ENCODE measurements at regions of chr3 and their contacts with region 1.

Region 1: GRCh38 chr3:33131331-33132018 is 17.7 kb downstream of the CRTAP start:
- DNase-seq: peak in 1 of 2 donors; percentile 69
- ATAC-seq: peak; percentile 59 to 81 (median 80)
- H3K4me3 ChIP-seq: no peak overlapping the region
- H3K4me3 Mint-ChIP-seq: no peak overlapping the region
- H3K27ac ChIP-seq: no peak overlapping the region
- H3K27ac Mint-ChIP-seq: no peak overlapping the region
- H3K4me1 ChIP-seq: no peaks in the 10 kb centered on the region
- H3K4me1 Mint-ChIP-seq: peaks cover 7 to 12% of the 10 kb centered on the region in 2 donors
- H3K27me3 ChIP-seq: no peaks in the 10 kb centered on the region
- H3K27me3 Mint-ChIP-seq: no peaks in the 10 kb centered on the region
- CTCF ChIP-seq: peak; percentile 71

Region 2: DNA sequence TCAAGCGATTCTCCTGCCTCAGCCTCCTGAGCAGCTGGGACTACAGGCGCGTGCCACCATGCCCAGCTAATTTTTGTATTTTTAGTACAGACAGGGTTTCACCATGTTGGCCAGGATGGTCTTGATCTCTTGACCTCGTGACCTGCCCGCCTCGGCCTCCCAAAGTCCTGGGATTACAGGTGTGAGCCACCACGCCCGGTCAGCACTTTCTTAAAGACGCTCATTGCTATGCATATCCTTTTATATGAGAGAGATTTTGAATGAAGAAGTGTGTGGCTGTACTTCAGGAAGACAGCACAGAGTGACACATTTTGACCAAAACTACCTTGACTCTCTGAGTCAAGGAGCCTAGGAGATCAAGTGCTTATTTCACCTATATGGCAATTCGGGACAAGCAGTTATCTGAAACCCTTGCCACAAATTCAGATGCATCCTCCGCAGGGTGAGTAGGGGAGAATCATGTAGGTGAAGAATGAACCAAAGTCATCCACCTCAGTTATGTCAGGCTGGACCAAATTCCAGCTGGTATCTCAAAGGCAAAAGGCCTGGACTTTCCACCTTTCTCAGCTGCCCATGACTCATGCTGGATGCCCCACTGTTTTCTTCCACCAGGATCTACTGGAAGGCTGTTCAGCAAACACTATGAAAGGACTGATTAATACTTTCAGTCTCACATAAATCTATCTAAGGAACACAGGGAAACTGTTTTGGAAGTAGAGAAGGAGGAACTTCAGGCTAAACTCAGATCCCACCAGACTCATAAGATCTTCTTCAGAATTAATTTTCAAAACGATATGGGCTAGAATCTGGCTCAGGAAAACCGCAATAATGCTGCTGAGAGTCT is 55.3 kb after region 1 on chr3:
- intact Hi-C with region 1: no loop called
- DNase-seq: no peak
- ATAC-seq: no peak
- H3K4me3 ChIP-seq: no peak overlapping the region
- H3K4me3 Mint-ChIP-seq: no peak overlapping the region
- H3K27ac ChIP-seq: no peak overlapping the region
- H3K27ac Mint-ChIP-seq: no peak overlapping the region
- H3K4me1 ChIP-seq: no peaks in the 10 kb centered on the region
- H3K4me1 Mint-ChIP-seq: no peaks in the 10 kb centered on the region
- H3K27me3 ChIP-seq: no peaks in the 10 kb centered on the region
- H3K27me3 Mint-ChIP-seq: peaks cover 7 to 15% of the 10 kb centered on the region in 2 donors
- CTCF ChIP-seq: no peak

Region 3: DNA sequence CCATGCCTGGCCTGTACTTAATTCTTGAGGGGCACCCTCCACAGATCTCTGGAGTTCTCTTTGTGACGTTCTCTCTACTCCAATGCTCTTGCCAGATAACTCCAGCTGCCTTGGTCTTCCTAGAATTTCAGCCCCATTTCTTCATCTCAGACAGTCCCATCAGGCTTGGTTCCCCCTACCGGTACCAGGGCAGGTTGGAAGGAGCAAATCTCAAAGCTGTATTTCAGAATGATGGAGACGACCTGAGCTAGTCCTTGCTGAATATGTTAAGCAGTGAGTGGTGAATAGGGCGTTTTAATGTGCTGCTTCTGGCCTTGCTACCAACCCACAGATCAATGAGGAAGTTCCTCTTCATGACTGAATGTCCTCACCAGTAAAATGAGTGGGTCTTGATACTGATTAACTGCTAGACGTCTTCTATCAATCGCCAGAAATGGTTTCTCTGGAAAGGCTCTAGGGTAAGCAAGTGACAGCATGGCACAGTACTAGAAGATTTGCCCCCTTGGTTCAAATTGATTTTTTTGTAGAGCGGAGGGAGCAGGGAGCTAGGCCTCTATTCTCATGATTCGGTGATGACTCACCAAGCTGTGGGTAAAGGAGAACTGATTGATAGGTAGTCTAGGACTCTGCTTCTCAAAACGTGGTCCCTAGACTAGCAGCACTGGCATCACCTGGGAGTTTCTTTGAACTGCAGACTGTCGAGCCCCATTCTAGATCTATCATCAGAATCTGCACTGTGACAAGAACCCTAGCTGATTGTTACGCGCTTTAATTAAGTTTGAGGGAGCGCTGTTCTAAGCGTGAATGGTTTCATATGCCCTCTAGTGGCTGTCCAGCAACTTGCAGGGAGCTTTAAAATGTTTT is 241.0 kb after region 1 on chr3:
- intact Hi-C with region 1: loop called (anchors 2 kb)
- DNase-seq: peak in 1 of 2 donors; percentile 68
- ATAC-seq: peak; percentile 64 to 80 (median 70)
- H3K4me3 ChIP-seq: no peak overlapping the region
- H3K4me3 Mint-ChIP-seq: no peak overlapping the region
- H3K27ac ChIP-seq: no peak overlapping the region
- H3K27ac Mint-ChIP-seq: no peak overlapping the region
- H3K4me1 ChIP-seq: peaks cover 3% of the 10 kb centered on the region
- H3K4me1 Mint-ChIP-seq: peaks cover 9 to 11% of the 10 kb centered on the region in 2 donors
- H3K27me3 ChIP-seq: peaks cover 3% of the 10 kb centered on the region
- H3K27me3 Mint-ChIP-seq: peaks cover 7 to 16% of the 10 kb centered on the region in 2 donors
- CTCF ChIP-seq: peak; percentile 88

Region 4: DNA sequence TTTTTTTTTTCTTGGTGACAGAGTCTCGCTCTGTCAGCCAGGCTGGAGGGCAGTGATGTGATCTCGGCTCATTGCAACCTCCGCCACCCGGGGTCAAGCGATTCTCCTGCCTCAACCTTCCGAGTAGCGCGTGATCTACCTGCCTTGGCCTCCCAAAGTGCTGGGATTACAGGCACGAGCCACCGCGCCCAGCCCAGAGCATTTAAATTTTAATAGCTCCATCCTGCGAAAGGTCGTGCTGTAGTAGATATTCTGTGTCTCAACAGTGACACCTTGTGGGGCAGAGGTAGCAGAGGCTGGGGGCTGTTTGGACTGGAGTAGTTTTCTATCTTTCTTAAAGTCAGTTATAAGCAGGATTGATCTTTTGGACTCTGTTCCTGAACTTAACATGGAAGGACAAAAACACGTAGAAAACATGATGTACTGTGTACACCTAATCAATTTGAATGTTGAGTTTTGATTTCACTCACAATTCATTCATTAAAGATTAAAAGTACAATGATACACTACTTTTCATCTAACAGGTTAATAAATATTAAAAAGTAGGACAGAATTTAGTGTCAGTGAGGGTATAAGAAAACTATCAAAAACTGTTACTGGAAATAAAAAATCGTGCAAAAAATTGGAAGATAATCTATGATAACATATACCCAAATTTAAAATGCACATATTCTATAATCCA is 656.0 kb after region 1 on chr3:
- intact Hi-C with region 1: loop called (anchors 1 kb)
- DNase-seq: peak; percentile 30 to 85
- ATAC-seq: peak; percentile 76 to 98 (median 97)
- H3K4me3 ChIP-seq: no peak overlapping the region
- H3K4me3 Mint-ChIP-seq: no peak overlapping the region
- H3K27ac ChIP-seq: no peak overlapping the region
- H3K27ac Mint-ChIP-seq: no peak overlapping the region
- H3K4me1 ChIP-seq: peaks cover 4% of the 10 kb centered on the region
- H3K4me1 Mint-ChIP-seq: peaks cover 0 to 8% of the 10 kb centered on the region in 2 donors
- H3K27me3 ChIP-seq: no peaks in the 10 kb centered on the region
- H3K27me3 Mint-ChIP-seq: peaks cover 10 to 11% of the 10 kb centered on the region in 2 donors
- CTCF ChIP-seq: peak; percentile 69